ENCODE measurements at regions of chr14 and their contacts with region 1.

Region 1: DNA sequence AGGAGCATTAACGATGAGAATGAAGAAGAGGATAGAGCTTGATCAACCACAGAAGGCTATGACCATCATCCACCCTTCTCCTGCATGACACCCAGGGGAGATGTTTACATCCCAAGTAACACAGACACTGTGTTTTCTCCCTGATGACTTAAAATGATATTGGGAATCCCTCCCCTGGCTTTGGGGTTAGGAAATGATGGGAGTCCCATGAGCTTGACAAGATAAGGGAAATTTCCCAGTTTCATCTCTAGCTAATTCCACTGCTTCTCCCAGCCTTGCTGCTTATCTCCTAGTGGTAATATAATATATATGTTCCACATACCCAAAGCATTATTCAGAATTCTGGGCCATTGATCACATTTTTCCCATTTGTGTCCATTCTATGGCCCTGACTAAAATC is 4.0 kb upstream of the OR6S1 start:
- DNase-seq: no peak
- H3K4me3 ChIP-seq: no peak overlapping the region
- H3K4me3 Mint-ChIP-seq: no peak overlapping the region
- H3K27ac ChIP-seq: no peak overlapping the region
- H3K27ac Mint-ChIP-seq: no peak overlapping the region
- H3K4me1 ChIP-seq: no peaks in the 10 kb centered on the region
- H3K4me1 Mint-ChIP-seq: no peaks in the 10 kb centered on the region
- H3K27me3 ChIP-seq: peaks cover 15% of the 10 kb centered on the region
- H3K27me3 Mint-ChIP-seq: peaks cover 7 to 55% of the 10 kb centered on the region in 2 donors

Region 2: GRCh38 chr14:20657216-20658128 is 12.0 kb after region 1 on chr14:
- CTCF ChIA-PET with region 1: interaction called, 15 read pairs
- POLR2A ChIA-PET with region 1: no interaction called
- DNase-seq: peak in 1 of 5 donors; percentile 16
- H3K4me3 ChIP-seq: no peak overlapping the region
- H3K4me3 Mint-ChIP-seq: peak overlapping the region in 1 of 7 donors; percentile 12
- H3K27ac ChIP-seq: no peak overlapping the region
- H3K27ac Mint-ChIP-seq: peak overlapping the region in 1 of 8 donors; percentile 1
- H3K4me1 ChIP-seq: peaks cover 8% of the 10 kb centered on the region
- H3K4me1 Mint-ChIP-seq: peaks cover 34 to 43% (median 40%) of the 10 kb centered on the region in 3 donors
- H3K27me3 ChIP-seq: peaks cover 47% of the 10 kb centered on the region
- H3K27me3 Mint-ChIP-seq: peaks cover 53 to 81% of the 10 kb centered on the region in 2 donors